Left ventricle myocardium inferior (tissue), 1 donor: ENCODE measurements at regions of chr19 and their contacts with region 1.

Region 1: GRCh38 chr19:49200238-49200862 is 42.8 kb downstream of the TRPM4 start:
- DNase-seq: no peak
- H3K4me3 ChIP-seq: no peak overlapping the region
- H3K27ac ChIP-seq: no peak overlapping the region
- H3K4me1 ChIP-seq: peaks cover 40% of the 10 kb centered on the region
- H3K27me3 ChIP-seq: no peaks in the 10 kb centered on the region
- CTCF ChIP-seq: no peak

Region 2: DNA sequence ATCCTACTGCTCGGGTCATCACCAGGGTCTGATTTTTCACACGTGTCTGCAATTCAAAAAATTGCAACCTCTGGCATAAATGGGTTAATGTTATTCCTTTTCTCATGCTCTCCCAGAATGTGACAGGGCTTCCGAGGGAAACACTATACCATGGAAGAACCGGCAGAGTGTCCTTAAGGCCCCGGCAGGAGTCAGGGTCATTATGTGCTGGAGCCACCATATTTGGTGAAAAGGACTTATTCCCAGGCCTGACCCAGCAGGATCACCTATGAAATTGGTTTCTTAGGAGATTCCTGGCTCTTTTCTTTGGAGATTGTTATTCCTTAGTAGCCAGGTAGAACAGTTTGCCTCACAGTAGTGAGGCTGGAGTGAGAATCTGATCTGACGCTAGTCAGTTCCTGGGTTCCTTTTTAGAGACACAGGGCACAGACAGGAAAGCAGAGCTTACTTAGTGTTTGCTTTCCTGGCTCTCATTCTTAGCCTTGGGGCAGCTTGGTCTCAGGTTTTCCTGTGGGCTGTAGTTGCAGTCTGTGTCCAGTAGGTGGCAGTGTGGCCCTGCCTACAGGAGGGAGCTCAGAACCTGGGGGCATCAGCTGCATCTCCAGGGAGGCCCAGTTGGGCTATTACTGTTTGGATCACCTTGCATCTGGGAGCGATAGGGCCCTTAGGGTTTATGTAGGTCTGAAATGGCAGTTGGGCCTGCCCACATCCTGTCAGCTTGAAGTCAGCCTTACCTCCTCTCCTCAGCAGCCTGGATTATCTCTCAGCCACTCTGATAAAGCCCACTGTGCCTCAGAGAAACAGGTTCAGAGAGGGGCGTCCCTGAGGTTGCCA is 102.7 kb before region 1 on chr19:
- intact Hi-C with region 1: loop called (anchors 5 kb)
- DNase-seq: peak; percentile 51
- H3K4me3 ChIP-seq: no peak overlapping the region
- H3K27ac ChIP-seq: no peak overlapping the region
- H3K4me1 ChIP-seq: peaks cover 38% of the 10 kb centered on the region
- H3K27me3 ChIP-seq: no peaks in the 10 kb centered on the region
- CTCF ChIP-seq: peak; percentile 100

Region 3: DNA sequence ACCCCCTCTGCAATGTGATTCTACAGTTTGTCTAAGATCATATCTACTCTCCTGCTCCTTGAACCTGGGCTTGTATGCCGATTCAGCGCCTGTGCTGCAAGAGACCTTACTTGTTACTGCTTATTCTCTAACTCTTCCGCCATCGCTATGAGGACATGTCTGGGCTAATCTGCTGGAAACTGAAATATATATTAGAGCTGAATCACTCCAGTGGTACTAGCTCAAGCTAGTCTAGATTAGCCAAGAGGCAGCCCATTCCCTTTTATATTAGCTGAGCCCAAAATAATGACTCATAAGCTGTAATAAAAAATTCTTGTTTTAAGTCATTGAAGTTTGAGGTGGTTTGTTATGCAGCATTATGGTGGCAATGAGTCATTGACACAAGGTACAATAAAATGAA is 71.8 kb after region 1 on chr19:
- intact Hi-C with region 1: no loop called
- DNase-seq: no peak
- H3K4me3 ChIP-seq: no peak overlapping the region
- H3K27ac ChIP-seq: no peak overlapping the region
- H3K4me1 ChIP-seq: no peaks in the 10 kb centered on the region
- H3K27me3 ChIP-seq: peaks cover 13% of the 10 kb centered on the region
- CTCF ChIP-seq: no peak